CD8-positive, alpha-beta T cell (primary cell): ENCODE measurements at regions of chr13 and their contacts with region 1.

Region 1: GRCh38 chr13:97359181-97360057 is 74.5 kb upstream of the RAP2A start:
- DNase-seq: peak in 8 of 9 experiments; percentile 29 to 79 (median 43)
- ATAC-seq: peak; percentile 95
- H3K4me3 ChIP-seq: no peak overlapping the region
- H3K4me3 Mint-ChIP-seq: no peak overlapping the region
- H3K27ac ChIP-seq: no peak overlapping the region
- H3K27ac Mint-ChIP-seq: no peak overlapping the region
- H3K4me1 ChIP-seq: no peaks in the 10 kb centered on the region
- H3K4me1 Mint-ChIP-seq: peaks cover 3% of the 10 kb centered on the region
- H3K27me3 ChIP-seq: no peaks in the 10 kb centered on the region
- H3K27me3 Mint-ChIP-seq: no peaks in the 10 kb centered on the region
- CTCF ChIP-seq: peak; percentile 75

Region 2: GRCh38 chr13:97018029-97018831 is 341.2 kb before region 1 on chr13:
- CTCF ChIA-PET with region 1: interaction called, 3 read pairs
- POLR2A ChIA-PET with region 1: no interaction called
- intact Hi-C with region 1: loop called (anchors 1 to 5 kb)
- DNase-seq: peak in 7 of 9 experiments; percentile 1 to 59 (median 18)
- ATAC-seq: peak; percentile 57
- H3K4me3 ChIP-seq: no peak overlapping the region
- H3K4me3 Mint-ChIP-seq: no peak overlapping the region
- H3K27ac ChIP-seq: no peak overlapping the region
- H3K27ac Mint-ChIP-seq: no peak overlapping the region
- H3K4me1 ChIP-seq: peaks cover 4% of the 10 kb centered on the region
- H3K4me1 Mint-ChIP-seq: peaks cover 11% of the 10 kb centered on the region
- H3K27me3 ChIP-seq: no peaks in the 10 kb centered on the region
- H3K27me3 Mint-ChIP-seq: peaks cover 42% of the 10 kb centered on the region
- CTCF ChIP-seq: peak; percentile 78

Region 3: DNA sequence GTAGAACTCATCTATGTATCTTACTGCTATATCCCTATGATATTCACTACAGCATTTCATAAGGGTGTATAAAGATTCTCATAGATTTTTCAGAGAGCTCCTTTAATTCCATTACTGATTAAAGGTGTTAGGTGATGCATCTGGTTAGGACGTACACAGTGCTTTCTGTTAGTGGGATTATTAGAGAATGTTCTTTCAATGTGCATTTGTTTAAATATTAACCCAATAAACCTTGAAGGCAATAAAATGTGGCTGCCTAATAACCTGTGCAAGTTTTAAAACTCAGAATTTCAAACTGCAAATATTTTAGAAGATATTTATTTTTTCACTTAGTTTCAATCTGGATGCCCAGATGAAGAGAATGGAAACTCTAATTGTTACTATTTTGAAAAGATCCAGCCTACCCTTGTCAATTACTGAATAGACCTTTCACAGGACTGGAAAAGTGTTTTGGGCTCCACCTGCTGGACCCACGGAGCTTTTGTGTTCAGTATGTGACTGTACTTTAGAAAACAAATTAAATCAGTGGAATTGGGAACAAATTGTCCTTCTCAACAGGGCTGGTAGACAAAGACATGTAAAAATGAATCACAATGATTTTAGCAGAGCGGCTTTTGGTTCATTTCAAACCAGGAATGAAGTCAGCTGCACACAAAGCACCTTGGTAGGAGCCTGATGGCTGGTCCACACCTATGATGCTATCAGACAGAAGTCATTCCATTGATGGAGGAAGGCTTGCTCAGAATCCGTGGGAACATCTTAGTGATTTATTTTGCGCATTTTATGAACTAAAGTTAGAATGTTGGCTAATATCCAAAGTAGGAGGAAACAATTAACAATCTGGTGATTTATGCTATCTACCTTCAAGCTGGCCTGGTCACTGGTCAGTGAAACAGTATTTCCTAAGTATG is 14.9 kb before region 1 on chr13:
- CTCF ChIA-PET with region 1: interaction called, 17 read pairs
- POLR2A ChIA-PET with region 1: interaction called, 3 read pairs
- intact Hi-C with region 1: loop called in 1 of 2 experiments (anchors 2 kb)
- DNase-seq: peak in 6 of 9 experiments; percentile 24 to 62 (median 48)
- ATAC-seq: no peak
- H3K4me3 ChIP-seq: no peak overlapping the region
- H3K4me3 Mint-ChIP-seq: no peak overlapping the region
- H3K27ac ChIP-seq: no peak overlapping the region
- H3K27ac Mint-ChIP-seq: no peak overlapping the region
- H3K4me1 ChIP-seq: no peaks in the 10 kb centered on the region
- H3K4me1 Mint-ChIP-seq: no peaks in the 10 kb centered on the region
- H3K27me3 ChIP-seq: no peaks in the 10 kb centered on the region
- H3K27me3 Mint-ChIP-seq: no peaks in the 10 kb centered on the region
- CTCF ChIP-seq: peak; percentile 62

Region 4: GRCh38 chr13:97686594-97686993 is 327.2 kb after region 1 on chr13:
- CTCF ChIA-PET with region 1: no interaction called
- POLR2A ChIA-PET with region 1: no interaction called
- intact Hi-C with region 1: no loop called
- DNase-seq: no peak
- ATAC-seq: no peak
- H3K4me3 ChIP-seq: no peak overlapping the region
- H3K4me3 Mint-ChIP-seq: no peak overlapping the region
- H3K27ac ChIP-seq: no peak overlapping the region
- H3K27ac Mint-ChIP-seq: no peak overlapping the region
- H3K4me1 ChIP-seq: no peaks in the 10 kb centered on the region
- H3K4me1 Mint-ChIP-seq: no peaks in the 10 kb centered on the region
- H3K27me3 ChIP-seq: no peaks in the 10 kb centered on the region
- H3K27me3 Mint-ChIP-seq: peaks cover 11% of the 10 kb centered on the region
- CTCF ChIP-seq: no peak